Sciatic nerve (tissue), 2 donors: ENCODE measurements at regions of chr6 and their contacts with region 1.

Region 1: DNA sequence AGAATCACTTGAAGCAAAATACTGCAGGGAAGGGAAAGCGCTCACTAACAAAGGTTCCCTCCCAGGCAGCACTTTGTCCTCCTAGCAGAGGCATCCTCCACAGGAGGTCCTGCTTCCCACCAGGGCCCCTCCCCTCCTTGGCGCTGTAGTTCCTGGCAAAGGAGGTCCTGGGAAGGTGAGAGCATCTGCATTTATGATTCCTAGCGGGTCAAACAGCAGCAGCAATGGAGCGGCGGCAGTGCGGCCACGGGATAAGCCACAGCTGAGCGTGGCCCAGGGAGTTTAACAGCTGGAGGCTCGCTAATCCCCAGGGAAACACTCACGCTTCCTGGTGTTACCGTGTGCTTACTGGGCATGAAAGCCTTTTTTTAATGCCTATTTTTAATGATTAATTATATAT is 185.8 kb downstream of the TTLL2 start:
- DNase-seq: no peak
- ATAC-seq: no peak

Region 2: GRCh38 chr6:166530211-166531095 is 980.2 kb before region 1 on chr6:
- intact Hi-C with region 1: no loop called
- DNase-seq: no peak
- ATAC-seq: no peak

Region 3: GRCh38 chr6:166540631-166541331 is 969.9 kb before region 1 on chr6:
- intact Hi-C with region 1: no loop called
- DNase-seq: no peak
- ATAC-seq: peak; percentile 75

Region 4: GRCh38 chr6:167477688-167478087 is 33.0 kb before region 1 on chr6:
- intact Hi-C with region 1: loop called (anchors 1 kb)
- DNase-seq: no peak
- ATAC-seq: no peak

Region 5: GRCh38 chr6:167733740-167734661 is 223.4 kb after region 1 on chr6:
- intact Hi-C with region 1: no loop called
- DNase-seq: no peak
- ATAC-seq: peak; percentile 92